ENCODE measurements at regions of chr5 and their contacts with region 1.

Region 1: DNA sequence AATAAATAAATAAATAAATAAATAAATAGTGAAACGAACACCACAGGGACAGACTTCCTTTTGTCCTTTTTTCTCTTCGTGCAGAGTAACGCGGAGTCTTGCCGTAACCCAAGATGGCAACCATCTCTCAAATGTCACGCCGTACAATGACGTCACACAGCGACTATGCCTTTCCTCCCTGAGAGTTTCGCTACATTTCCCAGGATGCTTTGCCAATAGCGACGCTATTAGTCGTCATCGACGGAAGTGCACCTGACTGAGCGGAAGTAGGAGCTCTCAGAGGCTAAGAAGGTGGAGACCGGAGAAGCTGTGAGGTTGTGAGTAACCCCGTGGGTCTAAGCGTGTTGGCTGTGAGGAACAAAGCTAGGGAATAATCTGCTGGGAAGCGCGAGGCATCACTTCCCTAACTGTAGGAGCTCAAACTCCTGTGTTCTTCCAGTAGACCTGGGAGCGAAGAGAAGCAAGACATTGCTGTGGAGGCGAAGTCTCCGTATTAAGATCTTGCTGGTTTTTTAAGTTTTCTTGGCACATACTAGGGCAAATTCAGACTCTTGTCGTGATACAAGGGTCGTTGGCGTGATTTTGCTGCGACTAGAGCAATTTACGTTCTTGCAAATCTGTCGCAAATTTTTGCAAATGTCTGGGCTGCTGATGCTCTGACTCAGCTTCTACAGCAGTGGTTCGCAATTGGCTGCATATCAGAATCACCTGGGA is at the start of gene TTC1:
- DNase-seq: peak; percentile 90
- H3K4me3 Mint-ChIP-seq: peak within 1 kb of the TSS; percentile 91
- H3K27ac Mint-ChIP-seq: peak within 1 kb of the TSS; percentile 91
- H3K4me1 Mint-ChIP-seq: peaks cover 29% of the 10 kb centered on the region
- H3K27me3 Mint-ChIP-seq: peaks cover 4% of the 10 kb centered on the region
- total RNA-seq, gene TTC1: 65.9 and 69.1 TPM in 2 replicates

Region 2: GRCh38 chr5:159163027-159163700 is 845.9 kb before region 1 on chr5:
- intact Hi-C with region 1: loop called (anchors 5 kb)
- DNase-seq: no peak
- H3K4me3 Mint-ChIP-seq: peak overlapping the region; percentile 16
- H3K27ac Mint-ChIP-seq: peak overlapping the region; percentile 64
- H3K4me1 Mint-ChIP-seq: peaks cover 53% of the 10 kb centered on the region
- H3K27me3 Mint-ChIP-seq: no peaks in the 10 kb centered on the region

Region 3: DNA sequence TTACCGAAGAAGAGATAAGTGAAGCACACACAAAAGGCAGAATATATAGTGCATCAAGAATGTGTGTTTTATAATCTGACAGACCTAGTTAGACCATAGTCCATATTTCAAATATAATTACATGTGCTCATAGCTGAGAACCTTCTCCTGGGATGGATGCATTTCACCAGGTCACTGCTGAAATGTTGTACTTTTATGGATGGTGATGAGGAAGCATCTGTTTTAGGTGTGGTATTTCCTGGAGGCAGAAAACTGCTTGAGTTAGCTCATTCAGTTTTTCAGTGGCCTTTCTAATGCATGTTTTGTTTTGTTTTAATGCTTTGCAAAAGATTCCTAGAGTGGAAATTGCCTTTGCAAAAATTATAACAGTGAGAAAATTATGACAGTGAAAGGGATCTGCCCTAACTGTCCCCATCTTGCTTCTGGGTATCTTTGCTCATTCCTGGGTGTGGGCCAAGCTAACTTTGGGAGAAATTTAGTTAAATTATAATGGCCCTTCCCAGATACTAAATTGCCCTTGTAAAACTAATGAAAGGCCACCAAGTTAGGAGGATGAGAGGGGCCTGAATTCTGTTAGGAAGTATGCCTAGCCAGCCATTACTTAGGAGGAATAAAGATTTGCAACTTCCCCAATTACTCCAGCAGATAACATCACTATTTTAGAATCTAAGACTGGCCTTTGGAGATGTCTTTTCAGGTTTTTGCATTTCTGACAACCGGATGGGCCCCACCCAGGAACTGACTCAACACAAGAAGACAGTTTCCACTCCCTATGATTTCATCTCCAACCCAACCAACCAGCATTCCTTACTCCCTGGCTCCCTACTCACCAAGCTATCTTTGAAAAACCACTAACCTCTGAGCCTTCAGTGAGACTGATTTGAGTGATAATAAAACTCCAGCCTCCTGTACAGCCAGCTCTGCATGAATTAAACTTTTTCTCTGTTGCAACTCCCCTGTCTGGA is 671.8 kb before region 1 on chr5:
- intact Hi-C with region 1: loop called (anchors 2 kb)
- DNase-seq: peak; percentile 66
- H3K4me3 Mint-ChIP-seq: peak overlapping the region; percentile 43
- H3K27ac Mint-ChIP-seq: peak overlapping the region; percentile 50
- H3K4me1 Mint-ChIP-seq: peaks cover 87% of the 10 kb centered on the region
- H3K27me3 Mint-ChIP-seq: no peaks in the 10 kb centered on the region

Region 4: GRCh38 chr5:160119142-160119904 is 110.3 kb after region 1 on chr5 and contains the start of gene PWWP2A:
- intact Hi-C with region 1: loop called (anchors 1 kb)
- DNase-seq: peak; percentile 96
- H3K4me3 Mint-ChIP-seq: peak within 1 kb of the TSS; percentile 95
- H3K27ac Mint-ChIP-seq: peak within 1 kb of the TSS; percentile 96
- H3K4me1 Mint-ChIP-seq: peaks cover 15% of the 10 kb centered on the region
- H3K27me3 Mint-ChIP-seq: peaks cover 4% of the 10 kb centered on the region
- total RNA-seq, gene PWWP2A: 29.7 and 30.2 TPM in 2 replicates

Region 5: DNA sequence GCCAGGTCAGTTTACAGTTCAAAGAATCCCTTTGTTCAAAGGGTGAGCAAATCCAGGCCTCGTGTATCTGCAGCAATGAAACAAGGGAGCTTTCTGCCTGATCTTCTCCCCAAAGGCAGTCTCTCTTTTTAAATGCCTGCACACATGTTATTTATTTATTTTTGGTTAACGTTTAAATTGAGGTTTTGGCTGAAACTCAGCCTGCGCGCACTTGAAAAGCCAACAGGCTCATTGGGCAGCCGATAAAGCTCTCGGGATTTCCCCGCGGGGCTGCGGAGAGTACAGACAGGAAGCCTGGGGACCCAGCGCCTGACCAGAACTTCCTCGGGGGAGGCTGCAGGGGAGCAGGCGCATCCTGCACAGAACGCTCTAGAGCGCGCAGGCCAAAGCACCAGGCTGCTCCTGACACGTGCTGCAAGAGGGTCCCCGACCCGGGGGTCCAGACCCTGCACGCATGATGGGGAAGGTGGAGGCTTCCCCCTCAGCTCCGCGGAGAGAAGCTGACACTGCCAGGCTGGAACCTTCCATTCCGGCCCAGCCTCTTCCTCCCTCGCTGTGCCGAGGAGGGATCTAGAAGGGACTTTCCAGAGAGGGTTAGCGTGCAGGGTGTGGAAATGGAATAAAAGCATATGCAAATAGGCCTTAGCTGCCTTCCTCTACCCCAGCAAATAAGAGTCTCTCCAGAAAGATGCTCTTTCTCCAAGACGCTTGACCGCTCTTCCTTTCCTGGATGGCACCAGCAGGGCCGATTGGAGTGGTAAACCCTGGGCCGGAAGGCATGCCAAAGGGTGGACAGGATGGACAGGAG is 458.7 kb after region 1 on chr5:
- intact Hi-C with region 1: loop called (anchors 1 kb)
- DNase-seq: peak; percentile 85
- H3K4me3 Mint-ChIP-seq: peak overlapping the region; percentile 100
- H3K27ac Mint-ChIP-seq: peak overlapping the region; percentile 100
- H3K4me1 Mint-ChIP-seq: peaks cover 68% of the 10 kb centered on the region
- H3K27me3 Mint-ChIP-seq: no peaks in the 10 kb centered on the region

Region 6: DNA sequence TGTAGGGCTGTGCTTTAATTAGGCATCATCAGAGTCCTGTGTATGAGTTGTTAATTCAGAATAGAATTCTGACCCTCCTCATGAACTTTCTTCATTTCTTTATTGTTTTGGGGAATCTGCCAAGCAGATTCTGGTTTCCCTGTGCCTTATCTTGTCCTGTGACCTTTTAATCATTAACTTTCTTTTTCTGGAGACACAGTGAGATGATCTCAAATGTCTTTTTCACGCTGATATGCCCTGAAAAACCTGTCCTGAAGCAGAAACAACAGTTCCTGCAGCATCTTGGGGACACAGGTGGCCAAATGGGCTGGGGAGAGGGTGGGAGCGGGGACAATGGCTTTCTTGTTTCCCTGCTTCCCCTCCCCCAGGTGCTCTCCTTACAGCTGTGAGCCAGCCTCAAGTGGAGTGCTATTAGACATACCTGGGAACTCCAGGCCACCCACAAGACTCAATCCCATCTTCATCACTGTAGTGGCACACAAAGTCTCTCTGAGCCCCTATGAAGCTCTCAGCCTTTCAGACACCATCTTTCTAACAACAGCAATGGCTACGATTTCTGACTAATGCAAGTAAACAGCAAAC is 629.2 kb after region 1 on chr5:
- intact Hi-C with region 1: no loop called
- DNase-seq: no peak
- H3K4me3 Mint-ChIP-seq: no peak overlapping the region
- H3K27ac Mint-ChIP-seq: no peak overlapping the region
- H3K4me1 Mint-ChIP-seq: no peaks in the 10 kb centered on the region
- H3K27me3 Mint-ChIP-seq: no peaks in the 10 kb centered on the region

Region 7: DNA sequence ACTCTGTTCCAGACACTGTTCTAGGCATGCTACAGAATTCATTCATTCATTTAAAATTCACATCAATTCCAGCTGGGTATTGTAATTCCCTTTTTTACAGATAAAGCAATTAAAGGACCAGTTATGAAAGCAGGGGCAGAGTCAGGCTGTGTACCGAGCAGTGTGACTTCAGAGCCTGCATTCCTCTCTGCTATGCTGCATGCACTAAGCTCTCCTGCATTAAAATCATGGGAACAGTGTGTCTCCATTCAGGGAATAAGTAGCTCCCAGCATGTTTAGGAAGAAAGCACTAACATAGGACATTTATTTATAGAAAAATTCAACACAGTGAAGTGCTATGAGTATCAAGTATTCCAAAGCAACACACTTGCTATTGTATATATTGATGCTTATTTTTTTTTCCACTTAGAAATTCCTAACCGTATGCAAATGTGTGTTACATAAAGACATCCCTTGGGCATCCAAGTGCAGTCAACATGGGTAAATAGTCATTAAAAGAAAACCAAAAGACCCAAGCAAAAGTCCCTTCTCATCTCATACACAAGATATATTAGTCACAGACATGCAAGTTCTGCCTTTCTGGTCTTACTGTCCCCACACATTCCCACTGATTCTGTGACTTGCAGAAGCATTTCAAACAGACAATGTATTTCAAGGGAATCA is 1363.8 kb after region 1 on chr5:
- intact Hi-C with region 1: no loop called
- DNase-seq: no peak
- H3K4me3 Mint-ChIP-seq: no peak overlapping the region
- H3K27ac Mint-ChIP-seq: no peak overlapping the region
- H3K4me1 Mint-ChIP-seq: no peaks in the 10 kb centered on the region
- H3K27me3 Mint-ChIP-seq: no peaks in the 10 kb centered on the region